Heart right ventricle (tissue), 16 donors: ENCODE measurements at regions of chr22 and their contacts with region 1.

Region 1: DNA sequence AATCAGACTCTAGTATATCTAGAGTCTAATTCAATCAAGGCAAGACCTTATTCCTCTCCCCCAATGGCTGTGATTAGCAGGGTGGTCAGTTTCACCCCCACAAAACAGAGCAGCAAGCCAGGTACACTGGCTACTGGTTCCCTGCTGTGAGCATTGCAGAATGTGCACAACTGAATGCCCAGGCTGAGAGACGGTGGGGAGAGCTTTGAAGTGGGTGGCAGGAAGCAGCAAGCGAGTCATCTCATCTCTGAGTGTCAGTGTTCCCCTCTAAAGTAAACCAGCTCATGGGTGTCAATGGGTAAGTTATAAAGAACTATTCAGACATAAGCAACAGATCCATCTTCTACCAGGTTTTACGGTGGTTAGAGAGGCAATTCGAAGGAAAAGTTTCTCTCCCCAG is 37.6 kb downstream of the GAB4 start:
- DNase-seq: no peak
- ATAC-seq: no peak
- H3K4me3 ChIP-seq: no peak overlapping the region
- H3K27ac ChIP-seq: no peak overlapping the region
- H3K4me1 ChIP-seq: no peaks in the 10 kb centered on the region
- H3K27me3 ChIP-seq: peaks cover 0 to 65% (median 32%) of the 10 kb centered on the region in 7 donors
- CTCF ChIP-seq: no peak

Region 2: DNA sequence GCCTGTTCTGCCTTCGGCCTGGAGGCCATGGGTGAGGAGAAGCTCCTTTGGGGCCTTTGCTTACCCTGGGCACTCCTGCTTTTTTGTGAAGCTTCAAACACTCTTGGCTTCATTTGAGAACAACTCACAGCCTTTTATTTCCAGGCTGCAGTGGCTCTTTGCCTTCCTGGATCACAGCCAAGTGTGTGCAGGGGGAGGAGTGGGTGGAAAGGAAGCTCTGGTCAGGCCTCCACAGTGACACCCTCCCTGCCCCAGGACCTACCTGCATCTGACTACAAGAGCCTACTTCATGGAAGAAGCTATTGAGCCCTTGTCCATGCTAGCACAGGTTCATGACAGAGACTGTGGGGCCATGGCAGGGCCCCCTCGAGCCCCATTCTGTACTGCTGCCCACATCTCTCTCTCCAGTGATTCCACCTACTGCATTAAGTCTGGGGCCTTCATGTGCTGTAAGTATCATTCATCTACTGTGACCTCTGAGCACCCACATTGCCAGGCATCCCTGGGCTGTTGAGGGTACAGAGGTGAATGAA is 14.7 kb before region 1 on chr22:
- intact Hi-C with region 1: no loop called
- DNase-seq: peak in 1 of 2 donors; percentile 34
- ATAC-seq: peak in 4 of 8 donors; percentile 22 to 56 (median 51)
- H3K4me3 ChIP-seq: no peak overlapping the region
- H3K27ac ChIP-seq: no peak overlapping the region
- H3K4me1 ChIP-seq: no peaks in the 10 kb centered on the region
- H3K27me3 ChIP-seq: peaks cover 0 to 7% (median 0%) of the 10 kb centered on the region in 7 donors
- CTCF ChIP-seq: no peak

Region 3: GRCh38 chr22:17007257-17007656 is 36.8 kb after region 1 on chr22:
- intact Hi-C with region 1: loop called in 1 of 10 experiments (anchors 2 kb)
- DNase-seq: no peak
- ATAC-seq: no peak
- H3K4me3 ChIP-seq: no peak overlapping the region
- H3K27ac ChIP-seq: no peak overlapping the region
- H3K4me1 ChIP-seq: no peaks in the 10 kb centered on the region
- H3K27me3 ChIP-seq: peaks cover 0 to 55% (median 37%) of the 10 kb centered on the region in 7 donors
- CTCF ChIP-seq: no peak